ENCODE measurements at regions of chr6 and their contacts with region 1.

Region 1: DNA sequence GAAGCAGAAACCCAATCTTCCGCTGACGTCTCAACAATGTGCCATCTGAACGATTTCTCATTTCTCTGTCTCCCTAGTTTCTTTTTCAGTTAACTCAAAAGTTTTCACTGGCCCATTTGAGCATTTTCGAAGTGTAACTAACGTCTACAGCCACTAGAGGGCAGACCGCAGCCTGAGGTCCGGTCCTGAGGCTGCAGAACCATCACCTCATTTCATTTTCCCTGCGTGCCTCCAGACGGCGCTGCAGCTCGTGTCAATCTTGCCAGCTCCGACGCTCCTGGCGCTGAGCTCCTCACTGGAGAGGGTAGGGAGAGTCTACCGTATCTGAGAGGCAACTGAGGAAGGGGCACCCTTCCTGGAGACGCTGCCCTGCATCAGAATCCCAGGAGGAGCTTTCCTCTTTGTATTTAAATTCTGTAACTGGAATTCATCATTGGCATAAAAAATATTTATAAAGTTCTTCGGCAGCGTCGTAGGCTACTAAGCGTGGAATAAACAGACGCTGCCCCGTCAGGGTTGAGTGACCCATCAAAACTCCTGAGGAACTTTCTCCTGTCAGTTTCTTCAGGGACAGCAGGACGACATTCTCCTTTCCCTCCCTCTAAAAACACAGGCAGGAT is 28.5 kb upstream of the DTNBP1 start:
- DNase-seq: peak; percentile 83 to 85
- H3K4me3 ChIP-seq: peak overlapping the region in 2 of 3 donors; percentile 5 to 11
- H3K27ac ChIP-seq: no peak overlapping the region
- H3K4me1 ChIP-seq: peaks cover 0 to 3% of the 10 kb centered on the region in 2 donors
- H3K27me3 ChIP-seq: no peaks in the 10 kb centered on the region
- CTCF ChIP-seq: peak; percentile 97 to 100 (median 100)
- POLR2A ChIP-seq: no peak

Region 2: GRCh38 chr6:14573703-14574306 is 1117.6 kb before region 1 on chr6:
- intact Hi-C with region 1: no loop called
- DNase-seq: no peak
- H3K4me3 ChIP-seq: no peak overlapping the region
- H3K27ac ChIP-seq: no peak overlapping the region
- H3K4me1 ChIP-seq: peaks cover 0 to 3% of the 10 kb centered on the region in 2 donors
- H3K27me3 ChIP-seq: no peaks in the 10 kb centered on the region
- CTCF ChIP-seq: no peak
- POLR2A ChIP-seq: no peak

Region 3: DNA sequence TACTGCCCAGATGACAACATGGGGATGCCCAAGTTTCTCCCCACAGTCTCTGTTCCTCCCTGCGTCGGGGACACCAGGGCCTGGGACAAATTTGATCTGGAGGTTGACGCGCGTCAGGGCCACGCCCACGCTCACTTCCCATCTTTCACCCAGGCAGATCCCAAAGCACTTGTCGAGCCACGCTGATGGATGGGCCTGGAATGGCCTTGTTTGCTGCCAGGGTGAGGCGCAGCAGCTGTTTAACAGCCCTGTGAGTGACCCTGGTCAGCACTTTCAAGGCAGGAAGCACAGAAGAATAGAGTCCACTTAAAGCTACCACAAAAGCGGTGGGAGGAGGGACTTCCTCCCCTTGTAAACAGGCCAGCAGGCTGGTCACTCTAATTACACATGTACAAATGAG is 770.2 kb before region 1 on chr6:
- intact Hi-C with region 1: no loop called
- DNase-seq: peak; percentile 11 to 30
- H3K4me3 ChIP-seq: no peak overlapping the region
- H3K27ac ChIP-seq: no peak overlapping the region
- H3K4me1 ChIP-seq: peaks cover 0 to 20% of the 10 kb centered on the region in 2 donors
- H3K27me3 ChIP-seq: no peaks in the 10 kb centered on the region
- CTCF ChIP-seq: no peak
- POLR2A ChIP-seq: no peak

Region 4: DNA sequence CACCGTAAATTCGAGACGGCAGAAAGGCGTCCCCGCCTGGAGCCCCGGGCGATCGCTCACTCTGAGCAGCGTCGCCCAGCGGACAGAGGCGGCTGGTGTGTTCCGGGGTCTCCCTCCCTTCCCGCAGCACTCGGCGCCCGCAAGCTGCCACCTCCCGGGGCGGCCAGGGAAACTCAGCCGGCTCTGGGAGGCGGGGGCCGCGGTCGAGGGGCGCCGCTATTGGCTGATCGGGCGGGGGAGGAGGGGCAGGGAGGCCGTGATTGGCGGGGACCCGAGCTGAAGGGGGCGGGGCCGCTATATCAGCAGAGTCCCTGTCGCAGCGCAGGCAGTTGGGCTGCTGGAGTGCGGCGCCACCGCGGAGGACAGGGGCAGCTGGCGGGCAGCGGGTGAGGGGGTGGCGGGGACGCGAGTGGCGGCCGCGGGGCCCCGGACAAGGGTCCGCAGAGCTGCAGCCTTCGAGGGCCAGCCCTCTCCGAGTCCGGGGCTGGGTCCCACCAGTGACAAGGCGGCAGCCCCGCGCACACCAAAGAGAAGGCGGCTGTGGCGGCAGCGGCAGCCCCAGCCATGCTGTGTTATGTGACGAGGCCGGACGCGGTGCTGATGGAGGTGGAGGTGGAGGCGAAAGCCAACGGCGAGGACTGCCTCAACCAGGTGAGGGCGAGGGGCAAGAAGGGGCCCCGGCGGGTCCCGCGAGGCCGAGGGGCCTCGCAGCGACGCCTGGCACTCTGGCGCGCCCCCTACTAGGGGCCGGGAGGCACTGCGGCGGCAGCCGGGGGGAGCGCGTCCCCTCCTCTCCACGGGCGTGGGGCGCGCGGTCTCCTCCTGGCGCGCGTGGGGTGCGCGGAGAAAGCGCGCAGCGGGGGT is 437.6 kb after region 1 on chr6 and contains the start of gene MYLIP:
- intact Hi-C with region 1: loop called (anchors 10 kb)
- DNase-seq: peak; percentile 98 to 99
- H3K4me3 ChIP-seq: peak within 1 kb of the TSS; percentile 95 to 99 (median 95)
- H3K27ac ChIP-seq: peak within 1 kb of the TSS; percentile 96 to 100 (median 99)
- H3K4me1 ChIP-seq: peaks cover 24 to 25% of the 10 kb centered on the region in 2 donors
- H3K27me3 ChIP-seq: no peaks in the 10 kb centered on the region
- CTCF ChIP-seq: peak; percentile 41 to 85 (median 74)
- POLR2A ChIP-seq: peak; percentile 98 to 99
- total RNA-seq, gene MYLIP: 61.8 to 108 (median 92.0) TPM

Region 5: DNA sequence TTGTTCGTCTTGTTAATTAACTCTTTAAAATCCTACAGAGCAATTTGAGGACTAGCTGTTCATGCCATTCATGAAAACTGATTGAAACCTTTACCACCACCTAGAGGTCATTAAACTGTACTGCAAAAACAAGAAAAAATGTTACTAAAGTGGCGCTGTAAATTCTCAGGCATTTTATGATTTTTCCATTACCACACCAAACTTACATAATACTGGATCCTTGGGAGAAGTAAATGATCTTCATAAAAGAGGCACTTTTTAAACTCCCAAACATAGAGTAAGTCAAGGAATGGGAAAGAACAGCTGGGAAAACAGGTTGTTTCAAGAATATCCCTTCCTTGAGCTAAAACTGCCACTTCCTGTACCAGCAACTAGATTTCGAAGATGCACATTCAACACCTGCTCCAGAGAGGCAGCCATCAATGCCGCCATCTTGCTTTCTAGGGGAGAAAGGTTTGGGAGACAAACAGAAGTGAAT is 491.9 kb after region 1 on chr6:
- intact Hi-C with region 1: loop called (anchors 5 kb)
- DNase-seq: no peak
- H3K4me3 ChIP-seq: no peak overlapping the region
- H3K27ac ChIP-seq: no peak overlapping the region
- H3K4me1 ChIP-seq: peaks cover 0 to 4% of the 10 kb centered on the region in 2 donors
- H3K27me3 ChIP-seq: no peaks in the 10 kb centered on the region
- CTCF ChIP-seq: peak; percentile 44 to 90 (median 68)
- POLR2A ChIP-seq: no peak

Region 6: DNA sequence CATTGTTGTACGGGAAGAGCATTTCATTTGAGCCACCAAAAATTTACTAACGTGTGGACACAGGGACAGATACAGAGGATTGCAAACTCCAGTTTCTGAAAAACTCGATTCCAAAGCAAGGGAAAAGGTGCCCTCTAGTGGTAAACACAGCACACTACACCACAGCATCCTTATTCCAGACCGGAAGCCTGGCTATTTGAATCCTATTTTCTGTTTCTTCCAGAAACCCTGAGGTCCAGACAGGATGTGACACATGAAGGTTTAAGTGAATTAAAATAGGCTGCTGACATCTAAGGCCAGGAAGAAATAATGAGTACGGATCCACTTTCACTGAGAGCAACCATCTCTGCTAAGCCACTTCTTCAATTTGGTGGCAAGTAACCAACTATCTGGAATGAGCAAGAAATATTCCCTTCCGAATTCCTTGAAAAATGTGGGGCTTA is 515.3 kb after region 1 on chr6:
- intact Hi-C with region 1: loop called (anchors 5 kb)
- DNase-seq: peak; percentile 60 to 66
- H3K4me3 ChIP-seq: no peak overlapping the region
- H3K27ac ChIP-seq: no peak overlapping the region
- H3K4me1 ChIP-seq: no peaks in the 10 kb centered on the region
- H3K27me3 ChIP-seq: no peaks in the 10 kb centered on the region
- CTCF ChIP-seq: peak; percentile 84 to 96 (median 94)
- POLR2A ChIP-seq: no peak